CD4-positive, alpha-beta T cell (primary cell): ENCODE measurements at regions of chr14 and their contacts with region 1.

Region 1: GRCh38 chr14:22570132-22570949 is 18.7 kb downstream of the DAD1 start:
- DNase-seq: peak; percentile 63 to 98 (median 80)
- ATAC-seq: peak; percentile 85
- H3K4me3 ChIP-seq: peak overlapping the region; percentile 45
- H3K4me3 Mint-ChIP-seq: peak overlapping the region; percentile 73
- H3K27ac ChIP-seq: peak overlapping the region; percentile 79 to 92
- H3K27ac Mint-ChIP-seq: peak overlapping the region; percentile 97
- H3K4me1 ChIP-seq: peaks cover 43% of the 10 kb centered on the region
- H3K4me1 Mint-ChIP-seq: peaks cover 71% of the 10 kb centered on the region
- H3K27me3 ChIP-seq: no peaks in the 10 kb centered on the region
- H3K27me3 Mint-ChIP-seq: no peaks in the 10 kb centered on the region
- CTCF ChIP-seq: peak; percentile 92

Region 2: GRCh38 chr14:21734457-21735074 is 835.8 kb before region 1 on chr14:
- CTCF ChIA-PET with region 1: interaction called, 10 read pairs
- POLR2A ChIA-PET with region 1: no interaction called
- intact Hi-C with region 1: no loop called
- DNase-seq: peak in 8 of 14 experiments; percentile 19 to 84 (median 46)
- ATAC-seq: peak; percentile 62
- H3K4me3 ChIP-seq: no peak overlapping the region
- H3K4me3 Mint-ChIP-seq: no peak overlapping the region
- H3K27ac ChIP-seq: no peak overlapping the region
- H3K27ac Mint-ChIP-seq: peak overlapping the region; percentile 9
- H3K4me1 ChIP-seq: no peaks in the 10 kb centered on the region
- H3K4me1 Mint-ChIP-seq: peaks cover 12% of the 10 kb centered on the region
- H3K27me3 ChIP-seq: peaks cover 0 to 9% of the 10 kb centered on the region in 2 experiments
- H3K27me3 Mint-ChIP-seq: peaks cover 52% of the 10 kb centered on the region
- CTCF ChIP-seq: peak; percentile 77

Region 3: DNA sequence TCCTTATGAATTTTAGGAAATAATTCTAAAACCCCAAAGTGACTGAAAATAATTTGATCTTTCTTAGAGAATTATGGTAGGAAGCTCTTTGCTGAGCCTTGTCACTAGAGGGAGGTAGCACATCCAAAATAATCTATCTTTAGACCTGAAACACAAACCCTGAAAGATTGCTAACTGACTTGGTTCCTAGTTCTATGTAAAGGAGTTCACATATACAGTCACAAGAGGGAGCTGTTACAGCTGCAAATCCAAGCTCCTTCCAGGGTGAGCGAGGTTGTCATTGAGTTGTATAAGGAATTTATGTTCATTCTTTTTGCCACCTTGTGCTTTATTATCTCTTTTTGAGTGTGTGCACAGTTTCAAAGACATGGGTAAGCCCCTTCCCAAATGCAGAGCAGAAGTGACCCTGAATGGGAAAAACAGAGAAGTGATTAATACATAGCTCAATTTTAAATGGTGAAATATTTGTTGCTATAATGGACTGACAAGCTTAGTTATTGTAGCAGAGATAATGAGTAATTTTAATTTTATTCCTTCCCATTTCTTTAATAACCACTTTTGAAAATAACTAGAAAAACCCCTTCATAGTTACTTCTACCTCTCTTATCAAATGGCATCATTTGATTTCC is 369.2 kb before region 1 on chr14:
- CTCF ChIA-PET with region 1: interaction called, 11 read pairs
- POLR2A ChIA-PET with region 1: interaction called, 5 read pairs
- intact Hi-C with region 1: no loop called
- DNase-seq: peak in 3 of 14 experiments; percentile 54 to 66 (median 59)
- ATAC-seq: peak; percentile 90
- H3K4me3 ChIP-seq: no peak overlapping the region
- H3K4me3 Mint-ChIP-seq: peak overlapping the region; percentile 62
- H3K27ac ChIP-seq: no peak overlapping the region
- H3K27ac Mint-ChIP-seq: no peak overlapping the region
- H3K4me1 ChIP-seq: no peaks in the 10 kb centered on the region
- H3K4me1 Mint-ChIP-seq: peaks cover 10% of the 10 kb centered on the region
- H3K27me3 ChIP-seq: no peaks in the 10 kb centered on the region
- H3K27me3 Mint-ChIP-seq: no peaks in the 10 kb centered on the region
- CTCF ChIP-seq: no peak

Region 4: DNA sequence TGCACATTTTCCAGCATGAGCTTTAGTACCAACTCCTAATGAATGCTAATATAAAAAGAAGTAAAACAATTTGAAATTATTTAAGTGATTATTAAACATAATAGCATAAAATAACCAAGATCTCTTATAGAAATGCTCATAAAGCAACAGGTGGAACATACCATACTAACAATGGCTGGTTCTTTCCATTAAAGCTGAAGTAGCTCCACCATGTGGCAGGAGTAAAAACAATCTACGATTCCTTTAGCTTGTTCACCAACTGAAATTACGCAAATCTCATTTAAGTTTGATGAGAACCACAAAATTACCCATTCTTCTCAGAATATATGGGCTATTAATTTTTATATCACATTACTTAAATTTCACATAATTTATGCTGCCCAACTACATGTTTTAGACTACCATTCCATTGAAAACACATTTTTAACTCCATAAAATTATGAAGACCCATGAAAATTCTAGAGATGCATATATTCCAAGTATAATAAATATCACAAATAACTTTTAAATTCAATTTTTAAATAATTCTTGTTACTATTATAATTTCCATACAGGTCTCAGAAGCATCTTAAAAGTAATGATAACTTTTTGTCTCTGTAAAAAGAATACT is 194.9 kb before region 1 on chr14:
- CTCF ChIA-PET with region 1: no interaction called
- POLR2A ChIA-PET with region 1: no interaction called
- intact Hi-C with region 1: no loop called
- DNase-seq: peak in 2 of 14 experiments; percentile 9 to 13
- ATAC-seq: no peak
- H3K4me3 ChIP-seq: no peak overlapping the region
- H3K4me3 Mint-ChIP-seq: no peak overlapping the region
- H3K27ac ChIP-seq: no peak overlapping the region
- H3K27ac Mint-ChIP-seq: no peak overlapping the region
- H3K4me1 ChIP-seq: no peaks in the 10 kb centered on the region
- H3K4me1 Mint-ChIP-seq: no peaks in the 10 kb centered on the region
- H3K27me3 ChIP-seq: no peaks in the 10 kb centered on the region
- H3K27me3 Mint-ChIP-seq: no peaks in the 10 kb centered on the region
- CTCF ChIP-seq: no peak

Region 5: DNA sequence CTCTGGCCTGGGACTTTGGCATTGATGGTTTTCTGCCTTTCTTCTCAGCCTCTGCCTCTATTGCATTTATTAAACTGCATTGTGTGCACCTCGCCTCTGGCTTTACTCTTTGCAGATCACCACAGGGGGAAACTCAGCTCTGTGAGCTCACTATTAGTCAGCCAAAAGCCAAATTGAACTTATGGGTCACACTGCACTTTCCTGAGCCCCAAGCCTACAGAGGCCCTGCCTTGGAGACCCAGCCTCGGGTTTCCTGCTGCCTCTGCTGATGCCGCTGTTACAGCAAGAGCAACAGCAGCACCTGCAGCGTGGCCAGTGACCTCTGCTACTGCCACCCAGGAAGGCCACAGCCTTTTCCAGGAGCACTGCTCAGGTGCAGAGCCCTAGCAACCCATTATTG is 103.8 kb before region 1 on chr14:
- CTCF ChIA-PET with region 1: no interaction called
- POLR2A ChIA-PET with region 1: no interaction called
- intact Hi-C with region 1: no loop called
- DNase-seq: no peak
- ATAC-seq: no peak
- H3K4me3 ChIP-seq: no peak overlapping the region
- H3K4me3 Mint-ChIP-seq: no peak overlapping the region
- H3K27ac ChIP-seq: no peak overlapping the region
- H3K27ac Mint-ChIP-seq: no peak overlapping the region
- H3K4me1 ChIP-seq: no peaks in the 10 kb centered on the region
- H3K4me1 Mint-ChIP-seq: no peaks in the 10 kb centered on the region
- H3K27me3 ChIP-seq: no peaks in the 10 kb centered on the region
- H3K27me3 Mint-ChIP-seq: no peaks in the 10 kb centered on the region
- CTCF ChIP-seq: no peak

Region 6: DNA sequence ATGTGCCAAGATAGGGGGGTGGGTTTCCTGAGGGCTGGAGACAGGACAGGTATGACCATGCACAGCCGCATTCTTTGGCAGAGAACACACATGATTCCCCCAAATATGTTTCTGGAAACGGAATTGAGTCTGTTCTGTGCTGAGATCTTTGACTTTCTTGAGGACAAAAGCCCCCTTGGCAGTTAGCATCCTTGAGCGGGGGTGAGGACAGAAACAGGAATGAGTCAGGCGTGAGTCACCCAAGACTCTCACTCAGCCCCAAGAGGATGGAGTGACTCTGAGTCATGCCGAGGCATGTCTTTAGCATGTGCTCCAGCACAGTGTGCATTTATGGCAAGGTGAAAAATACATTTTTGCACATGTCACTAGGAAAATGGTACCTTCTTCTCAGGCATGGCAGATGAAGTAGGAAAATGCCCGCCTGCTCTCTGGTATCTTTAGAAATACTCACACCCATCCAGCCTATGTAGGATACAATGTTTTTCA is 33.4 kb before region 1 on chr14:
- CTCF ChIA-PET with region 1: interaction called, 33 read pairs
- POLR2A ChIA-PET with region 1: interaction called, 97 read pairs
- intact Hi-C with region 1: no loop called
- DNase-seq: peak in 13 of 14 experiments; percentile 66 to 92 (median 74)
- ATAC-seq: peak; percentile 85
- H3K4me3 ChIP-seq: peak overlapping the region; percentile 61
- H3K4me3 Mint-ChIP-seq: peak overlapping the region; percentile 81
- H3K27ac ChIP-seq: peak overlapping the region; percentile 61 to 99
- H3K27ac Mint-ChIP-seq: peak overlapping the region; percentile 93
- H3K4me1 ChIP-seq: peaks cover 86% of the 10 kb centered on the region
- H3K4me1 Mint-ChIP-seq: peaks cover 99% of the 10 kb centered on the region
- H3K27me3 ChIP-seq: no peaks in the 10 kb centered on the region
- H3K27me3 Mint-ChIP-seq: no peaks in the 10 kb centered on the region
- CTCF ChIP-seq: no peak

Region 7: DNA sequence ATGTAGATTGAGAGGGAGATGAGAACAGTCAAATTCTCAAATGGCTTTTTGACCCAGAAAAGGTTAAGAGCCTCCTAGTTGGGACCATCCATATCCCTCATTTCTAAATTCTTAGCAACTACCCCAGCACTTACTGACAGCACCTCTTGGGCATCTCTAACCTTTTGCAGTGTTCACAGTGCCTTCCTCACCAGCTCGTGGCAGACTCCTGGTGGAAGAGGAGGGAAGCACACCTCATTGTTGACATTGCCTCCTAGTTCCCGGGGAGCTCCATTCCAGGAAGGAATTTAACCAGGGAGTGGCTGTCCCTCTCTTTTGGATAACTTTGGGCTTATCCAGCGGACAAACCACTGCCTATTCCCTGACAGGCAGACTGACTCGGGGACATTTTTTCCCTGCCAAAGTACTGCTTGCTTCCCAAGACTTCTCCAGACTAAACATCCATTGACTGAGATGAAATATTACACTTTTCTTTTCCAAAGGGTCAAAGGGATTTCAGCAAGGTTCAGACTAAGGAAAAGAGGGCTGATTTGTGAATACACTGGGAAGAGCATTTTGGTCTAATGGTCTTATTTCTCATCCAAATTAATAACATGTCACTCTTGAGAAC is 82.8 kb after region 1 on chr14:
- CTCF ChIA-PET with region 1: interaction called, 47 read pairs
- POLR2A ChIA-PET with region 1: interaction called, 17 read pairs
- intact Hi-C with region 1: loop called (anchors 1 kb)
- DNase-seq: peak; percentile 20 to 75 (median 37)
- ATAC-seq: peak; percentile 90
- H3K4me3 ChIP-seq: no peak overlapping the region
- H3K4me3 Mint-ChIP-seq: no peak overlapping the region
- H3K27ac ChIP-seq: no peak overlapping the region
- H3K27ac Mint-ChIP-seq: no peak overlapping the region
- H3K4me1 ChIP-seq: no peaks in the 10 kb centered on the region
- H3K4me1 Mint-ChIP-seq: no peaks in the 10 kb centered on the region
- H3K27me3 ChIP-seq: no peaks in the 10 kb centered on the region
- H3K27me3 Mint-ChIP-seq: no peaks in the 10 kb centered on the region
- CTCF ChIP-seq: peak; percentile 69

Region 8: DNA sequence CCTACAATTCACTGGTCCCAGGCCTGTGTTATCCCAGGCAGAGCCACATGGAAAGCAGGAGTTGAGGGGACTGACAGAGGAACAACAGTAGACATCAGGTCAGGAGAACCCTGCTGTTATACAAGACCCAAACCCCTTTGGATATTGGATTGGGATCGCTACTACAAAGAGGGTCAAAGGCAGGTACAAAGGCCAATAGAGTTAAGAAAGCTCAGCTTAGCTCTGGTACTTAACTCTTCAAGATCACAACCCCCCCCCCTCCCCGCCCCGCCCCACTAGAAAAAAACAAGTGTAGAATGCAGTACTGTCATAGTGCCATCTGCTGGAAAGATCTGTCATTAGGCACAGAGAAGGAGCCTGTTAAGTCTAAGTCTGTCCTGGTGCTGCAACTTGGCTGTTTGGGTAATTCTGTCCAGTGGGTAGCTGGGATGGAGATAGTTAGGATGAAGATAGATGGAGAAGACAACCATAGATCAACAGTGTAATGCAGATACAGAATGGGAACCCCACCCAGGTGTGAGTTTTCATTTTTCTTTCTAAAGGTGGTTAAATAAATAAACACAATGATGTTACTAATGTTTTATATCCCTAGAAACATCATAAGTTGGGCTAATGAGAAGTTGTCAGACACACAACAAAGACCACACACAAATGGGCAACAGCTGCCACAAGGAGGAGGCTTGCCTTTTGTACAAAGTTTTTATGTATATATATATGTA is 329.9 kb after region 1 on chr14:
- CTCF ChIA-PET with region 1: interaction called, 17 read pairs
- POLR2A ChIA-PET with region 1: interaction called, 5 read pairs
- intact Hi-C with region 1: loop called (anchors 1 to 2 kb)
- DNase-seq: peak in 13 of 14 experiments; percentile 14 to 87 (median 36)
- ATAC-seq: peak; percentile 92
- H3K4me3 ChIP-seq: no peak overlapping the region
- H3K4me3 Mint-ChIP-seq: no peak overlapping the region
- H3K27ac ChIP-seq: no peak overlapping the region
- H3K27ac Mint-ChIP-seq: no peak overlapping the region
- H3K4me1 ChIP-seq: peaks cover 13% of the 10 kb centered on the region
- H3K4me1 Mint-ChIP-seq: peaks cover 15% of the 10 kb centered on the region
- H3K27me3 ChIP-seq: no peaks in the 10 kb centered on the region
- H3K27me3 Mint-ChIP-seq: no peaks in the 10 kb centered on the region
- CTCF ChIP-seq: peak; percentile 68